ENCODE measurements at regions of chr4 and their contacts with region 1.

Region 1: GRCh38 chr4:52659001-52659721 is at the start of gene USP46:
- DNase-seq: peak; percentile 15 to 86
- H3K4me3 ChIP-seq: peak within 1 kb of the TSS; percentile 75 to 97
- H3K27ac ChIP-seq: peak within 1 kb of the TSS; percentile 95 to 96
- H3K4me1 ChIP-seq: peaks cover 0 to 9% of the 10 kb centered on the region in 2 donors
- H3K27me3 ChIP-seq: no peaks in the 10 kb centered on the region
- CTCF ChIP-seq: no peak
- total RNA-seq, gene USP46: 7.5 TPM

Region 2: DNA sequence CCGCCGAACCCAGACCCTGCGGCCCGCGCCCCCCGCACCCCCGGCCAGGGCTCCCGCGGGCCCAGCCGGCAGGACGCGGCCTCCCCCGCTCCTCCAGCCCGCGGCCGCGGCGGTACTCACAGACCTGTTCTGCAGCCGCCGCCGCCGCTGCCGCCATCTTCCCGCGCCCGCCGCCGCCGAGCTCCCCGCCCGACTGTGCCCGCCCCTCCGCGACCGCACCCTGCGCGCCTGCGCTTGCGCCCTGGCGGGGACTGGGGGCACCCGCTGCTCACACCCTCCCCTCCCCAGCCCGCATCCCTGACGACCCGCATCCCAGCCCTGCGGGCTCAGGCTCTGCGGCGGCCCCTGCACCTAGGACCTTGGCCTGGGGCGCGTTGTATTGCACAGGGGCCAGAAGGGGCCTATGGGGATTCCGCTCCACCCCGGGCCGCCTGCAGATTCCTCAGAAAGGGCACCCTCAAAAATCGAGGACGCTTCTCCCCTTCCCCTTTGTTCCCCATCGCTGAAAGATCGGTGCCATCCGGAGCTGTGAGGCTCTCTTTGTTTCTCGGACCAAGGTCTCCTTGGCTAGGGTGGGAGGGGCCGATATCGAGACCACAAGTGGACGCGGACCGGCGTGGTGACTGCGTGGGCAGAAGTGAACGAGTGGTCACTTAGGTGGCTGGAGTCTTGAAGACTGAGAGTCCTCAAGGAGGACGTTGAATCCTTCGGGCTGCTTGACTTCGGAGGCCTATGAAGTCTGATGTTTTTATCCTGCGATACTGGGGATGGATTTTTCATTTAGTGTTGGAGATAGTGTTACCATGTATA is 620.9 kb before region 1 on chr4 and contains the start of gene SGCB:
- intact Hi-C with region 1: loop called (anchors 10 kb)
- DNase-seq: peak in 1 of 2 donors; percentile 78
- H3K4me3 ChIP-seq: peak within 1 kb of the TSS; percentile 91 to 93
- H3K27ac ChIP-seq: peak within 1 kb of the TSS; percentile 73 to 79
- H3K4me1 ChIP-seq: peaks cover 0 to 16% of the 10 kb centered on the region in 2 donors
- H3K27me3 ChIP-seq: no peaks in the 10 kb centered on the region
- CTCF ChIP-seq: peak in 1 of 3 experiments; percentile 13
- total RNA-seq, gene SGCB: 14.9 TPM

Region 3: GRCh38 chr4:52595001-52595400 is 64.2 kb before region 1 on chr4:
- intact Hi-C with region 1: loop called (anchors 5 kb)
- DNase-seq: no peak
- H3K4me3 ChIP-seq: no peak overlapping the region
- H3K27ac ChIP-seq: no peak overlapping the region
- H3K4me1 ChIP-seq: peaks cover 0 to 11% of the 10 kb centered on the region in 2 donors
- H3K27me3 ChIP-seq: no peaks in the 10 kb centered on the region
- CTCF ChIP-seq: no peak

Region 4: GRCh38 chr4:52617336-52618020 is 41.7 kb before region 1 on chr4:
- intact Hi-C with region 1: no loop called
- DNase-seq: no peak
- H3K4me3 ChIP-seq: no peak overlapping the region
- H3K27ac ChIP-seq: no peak overlapping the region
- H3K4me1 ChIP-seq: no peaks in the 10 kb centered on the region
- H3K27me3 ChIP-seq: no peaks in the 10 kb centered on the region
- CTCF ChIP-seq: no peak

Region 5: DNA sequence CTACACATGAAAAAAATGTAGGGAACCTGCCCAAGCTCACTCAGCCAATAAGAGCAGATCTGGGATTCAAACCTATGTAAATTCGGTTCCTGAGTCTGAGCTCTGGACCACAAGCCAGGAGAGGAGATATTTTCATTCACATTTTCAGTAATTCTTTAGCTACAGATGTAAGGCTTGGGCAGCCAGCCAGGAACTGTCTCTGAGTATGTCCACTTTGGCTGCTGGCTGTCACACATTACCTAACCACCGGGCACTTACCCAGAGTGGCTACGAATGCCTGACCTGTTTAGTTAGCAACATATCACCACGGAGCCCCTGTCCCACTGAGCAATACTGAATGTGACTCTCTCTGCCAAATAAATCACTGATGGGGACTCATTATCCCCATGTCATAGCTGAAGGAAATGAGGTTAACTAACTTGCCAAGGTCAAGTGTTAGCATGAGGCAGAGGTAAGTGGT is 15.3 kb before region 1 on chr4:
- intact Hi-C with region 1: loop called (anchors 2 kb)
- DNase-seq: peak; percentile 43 to 92
- H3K4me3 ChIP-seq: no peak overlapping the region
- H3K27ac ChIP-seq: peak overlapping the region; percentile 64 to 73
- H3K4me1 ChIP-seq: peaks cover 0 to 41% of the 10 kb centered on the region in 2 donors
- H3K27me3 ChIP-seq: no peaks in the 10 kb centered on the region
- CTCF ChIP-seq: no peak

Region 6: GRCh38 chr4:52721968-52722815 is 63.0 kb after region 1 on chr4:
- intact Hi-C with region 1: loop called (anchors 1 kb)
- DNase-seq: peak; percentile 83 to 96
- H3K4me3 ChIP-seq: peak overlapping the region; percentile 86 to 93
- H3K27ac ChIP-seq: peak overlapping the region; percentile 84 to 87
- H3K4me1 ChIP-seq: no peaks in the 10 kb centered on the region
- H3K27me3 ChIP-seq: no peaks in the 10 kb centered on the region
- CTCF ChIP-seq: no peak

Region 7: DNA sequence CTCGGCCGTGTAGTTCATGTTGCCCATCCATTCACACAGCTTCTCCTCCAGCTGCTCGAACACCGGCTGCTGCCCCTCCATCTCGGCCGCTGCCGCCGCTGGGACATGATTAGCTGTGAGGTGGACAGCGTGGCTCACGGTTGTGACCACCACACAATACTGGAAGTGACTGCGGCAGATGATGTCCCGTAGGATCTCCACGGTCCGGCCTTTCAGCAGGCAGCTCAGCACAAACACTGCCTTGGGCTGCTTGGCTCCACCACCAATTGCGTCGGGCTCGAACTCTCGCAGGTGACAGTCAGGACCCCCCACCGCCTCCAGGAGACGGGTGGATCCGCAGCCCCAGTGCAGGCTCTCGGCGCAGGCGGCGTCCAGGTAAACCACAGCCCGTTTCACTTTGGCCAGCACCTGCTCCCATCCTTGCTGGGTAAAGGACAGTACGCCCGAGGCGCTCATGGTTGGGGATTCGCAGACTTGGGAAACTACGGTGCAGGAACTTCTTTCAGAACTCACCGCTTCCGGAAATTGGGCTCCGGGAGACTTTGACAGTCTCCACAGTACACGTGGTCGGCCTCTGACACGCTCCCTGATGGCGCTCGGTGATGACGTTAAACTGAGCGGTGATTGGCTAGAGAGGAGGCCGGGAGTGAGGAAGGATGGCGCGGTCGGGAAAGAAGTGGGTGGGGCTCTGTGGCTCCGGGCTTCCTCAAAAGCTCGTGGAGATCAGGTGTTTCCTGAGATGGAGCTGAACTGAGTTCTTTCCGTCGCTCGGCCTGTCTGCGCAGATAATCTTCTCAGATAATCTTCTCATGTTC is 706.5 kb after region 1 on chr4 and contains the start of gene SCFD2:
- intact Hi-C with region 1: loop called (anchors 2 kb)
- DNase-seq: peak; percentile 95 to 99
- H3K4me3 ChIP-seq: peak within 1 kb of the TSS; percentile 69 to 97
- H3K27ac ChIP-seq: peak within 1 kb of the TSS; percentile 30 to 53
- H3K4me1 ChIP-seq: peaks cover 4 to 25% of the 10 kb centered on the region in 2 donors
- H3K27me3 ChIP-seq: no peaks in the 10 kb centered on the region
- CTCF ChIP-seq: no peak
- total RNA-seq, gene SCFD2: 22.8 TPM

Measured in ascending aorta (tissue), 2 donors.